CD4-positive, alpha-beta T cell (primary cell): ENCODE measurements at regions of chr6 and their contacts with region 1.

Region 1: DNA sequence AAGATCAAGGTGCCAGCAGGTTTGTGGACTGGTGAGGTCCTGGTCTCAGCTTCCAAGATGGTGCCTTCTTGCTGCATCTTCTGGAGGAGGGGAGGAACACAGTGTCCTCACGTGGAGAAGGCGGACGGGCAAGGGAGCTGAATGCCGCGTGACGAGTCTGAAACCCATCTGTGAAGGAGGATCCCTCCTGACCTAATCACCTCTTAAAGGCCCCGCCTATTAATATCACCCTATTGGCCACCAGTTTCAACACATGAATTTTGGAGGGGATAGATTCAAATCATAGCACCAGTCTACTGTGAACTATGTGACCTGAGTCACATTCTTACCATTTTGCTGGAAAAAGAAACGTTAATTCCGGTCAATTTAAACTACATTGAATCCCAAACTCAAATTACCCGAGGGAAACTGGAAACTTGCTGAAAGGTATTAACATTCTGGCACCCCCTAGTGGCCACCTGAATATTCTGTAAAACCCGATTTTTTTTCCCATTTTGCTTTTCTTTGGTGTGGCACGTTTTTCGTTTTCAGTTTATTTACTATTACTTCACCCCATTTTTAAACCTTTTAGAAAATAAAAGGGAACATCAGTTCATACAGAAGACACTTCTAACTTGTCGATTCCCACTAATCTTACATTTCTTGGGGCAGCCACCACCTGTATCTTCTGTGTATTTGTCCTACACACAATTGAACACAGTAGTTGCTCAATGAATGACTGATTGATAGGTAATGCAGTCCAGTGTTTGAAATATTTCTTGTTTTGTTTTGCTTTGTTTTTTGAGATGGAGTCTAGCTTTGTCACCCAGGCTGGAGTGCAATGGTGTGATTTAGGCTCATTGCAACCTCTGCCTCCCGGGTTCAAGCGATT is 17.9 kb upstream of the CCDC170 start:
- DNase-seq: peak in 11 of 14 experiments; percentile 7 to 76 (median 34)
- ATAC-seq: no peak
- H3K4me3 ChIP-seq: no peak overlapping the region
- H3K4me3 Mint-ChIP-seq: peak overlapping the region; percentile 48
- H3K27ac ChIP-seq: no peak overlapping the region
- H3K27ac Mint-ChIP-seq: no peak overlapping the region
- H3K4me1 ChIP-seq: peaks cover 2% of the 10 kb centered on the region
- H3K4me1 Mint-ChIP-seq: peaks cover 10% of the 10 kb centered on the region
- H3K27me3 ChIP-seq: no peaks in the 10 kb centered on the region
- H3K27me3 Mint-ChIP-seq: no peaks in the 10 kb centered on the region
- CTCF ChIP-seq: peak; percentile 93

Region 2: GRCh38 chr6:149545754-149546528 is 1929.9 kb before region 1 on chr6 and contains the start of gene PPIL4:
- CTCF ChIA-PET with region 1: no interaction called
- POLR2A ChIA-PET with region 1: no interaction called
- intact Hi-C with region 1: no loop called
- DNase-seq: peak; percentile 93 to 99 (median 96)
- ATAC-seq: peak; percentile 82
- H3K4me3 ChIP-seq: peak within 1 kb of the TSS; percentile 69
- H3K4me3 Mint-ChIP-seq: peak within 1 kb of the TSS; percentile 99
- H3K27ac ChIP-seq: peak within 1 kb of the TSS; percentile 98 to 99
- H3K27ac Mint-ChIP-seq: peak within 1 kb of the TSS; percentile 96
- H3K4me1 ChIP-seq: peaks cover 21% of the 10 kb centered on the region
- H3K4me1 Mint-ChIP-seq: peaks cover 37% of the 10 kb centered on the region
- H3K27me3 ChIP-seq: no peaks in the 10 kb centered on the region
- H3K27me3 Mint-ChIP-seq: no peaks in the 10 kb centered on the region
- CTCF ChIP-seq: peak; percentile 99
- total RNA-seq, gene PPIL4: 51.8 to 53.5 TPM

Region 3: DNA sequence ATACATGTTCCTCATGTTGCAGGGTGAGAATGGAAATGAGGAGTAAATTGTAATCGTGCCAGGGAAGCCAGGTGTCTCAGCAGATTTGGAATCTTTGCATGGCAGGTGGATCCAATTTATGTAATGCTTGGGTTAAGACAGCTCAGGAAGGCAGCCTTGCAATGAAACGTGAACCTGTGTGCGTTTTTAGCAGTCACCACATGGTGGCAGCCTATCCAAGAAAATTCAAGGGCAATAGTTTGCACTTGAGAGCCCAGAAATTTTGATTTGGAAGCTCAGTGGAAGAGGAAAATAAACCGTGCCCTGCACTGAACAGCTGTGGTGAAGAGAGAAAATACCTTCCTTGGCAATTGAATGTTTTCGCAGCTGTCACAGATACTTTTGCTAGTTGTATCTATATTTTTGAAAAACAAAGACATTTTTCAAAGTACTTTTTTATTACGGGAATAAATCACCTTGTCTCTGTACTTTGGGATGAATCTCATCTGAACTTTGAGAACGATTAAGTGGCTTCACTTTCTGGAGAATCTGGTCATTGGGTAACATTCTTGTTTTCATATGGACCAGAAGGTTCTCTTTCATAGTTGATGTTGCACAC is 583.9 kb before region 1 on chr6:
- CTCF ChIA-PET with region 1: no interaction called
- POLR2A ChIA-PET with region 1: no interaction called
- intact Hi-C with region 1: loop called (anchors 5 to 10 kb)
- DNase-seq: peak; percentile 30 to 74 (median 50)
- ATAC-seq: peak; percentile 71
- H3K4me3 ChIP-seq: no peak overlapping the region
- H3K4me3 Mint-ChIP-seq: no peak overlapping the region
- H3K27ac ChIP-seq: no peak overlapping the region
- H3K27ac Mint-ChIP-seq: no peak overlapping the region
- H3K4me1 ChIP-seq: peaks cover 7% of the 10 kb centered on the region
- H3K4me1 Mint-ChIP-seq: peaks cover 19% of the 10 kb centered on the region
- H3K27me3 ChIP-seq: no peaks in the 10 kb centered on the region
- H3K27me3 Mint-ChIP-seq: no peaks in the 10 kb centered on the region
- CTCF ChIP-seq: peak; percentile 91

Region 4: GRCh38 chr6:151014404-151015100 is 461.3 kb before region 1 on chr6:
- CTCF ChIA-PET with region 1: no interaction called
- POLR2A ChIA-PET with region 1: no interaction called
- intact Hi-C with region 1: loop called (anchors 10 kb)
- DNase-seq: peak; percentile 32 to 79 (median 42)
- ATAC-seq: peak; percentile 60
- H3K4me3 ChIP-seq: no peak overlapping the region
- H3K4me3 Mint-ChIP-seq: peak overlapping the region; percentile 6
- H3K27ac ChIP-seq: no peak overlapping the region
- H3K27ac Mint-ChIP-seq: no peak overlapping the region
- H3K4me1 ChIP-seq: peaks cover 2% of the 10 kb centered on the region
- H3K4me1 Mint-ChIP-seq: peaks cover 4% of the 10 kb centered on the region
- H3K27me3 ChIP-seq: no peaks in the 10 kb centered on the region
- H3K27me3 Mint-ChIP-seq: no peaks in the 10 kb centered on the region
- CTCF ChIP-seq: peak; percentile 98

Region 5: GRCh38 chr6:151349651-151350282 is 126.1 kb before region 1 on chr6:
- CTCF ChIA-PET with region 1: no interaction called
- POLR2A ChIA-PET with region 1: no interaction called
- intact Hi-C with region 1: loop called in 1 of 2 experiments (anchors 2 kb)
- DNase-seq: no peak
- ATAC-seq: no peak
- H3K4me3 ChIP-seq: no peak overlapping the region
- H3K4me3 Mint-ChIP-seq: no peak overlapping the region
- H3K27ac ChIP-seq: no peak overlapping the region
- H3K27ac Mint-ChIP-seq: no peak overlapping the region
- H3K4me1 ChIP-seq: peaks cover 11% of the 10 kb centered on the region
- H3K4me1 Mint-ChIP-seq: no peaks in the 10 kb centered on the region
- H3K27me3 ChIP-seq: no peaks in the 10 kb centered on the region
- H3K27me3 Mint-ChIP-seq: no peaks in the 10 kb centered on the region
- CTCF ChIP-seq: no peak

Region 6: GRCh38 chr6:151409260-151409659 is 66.6 kb before region 1 on chr6:
- CTCF ChIA-PET with region 1: no interaction called
- POLR2A ChIA-PET with region 1: no interaction called
- intact Hi-C with region 1: loop called in 1 of 2 experiments (anchors 2 kb)
- DNase-seq: no peak
- ATAC-seq: no peak
- H3K4me3 ChIP-seq: no peak overlapping the region
- H3K4me3 Mint-ChIP-seq: no peak overlapping the region
- H3K27ac ChIP-seq: no peak overlapping the region
- H3K27ac Mint-ChIP-seq: peak overlapping the region; percentile 4
- H3K4me1 ChIP-seq: peaks cover 15% of the 10 kb centered on the region
- H3K4me1 Mint-ChIP-seq: peaks cover 44% of the 10 kb centered on the region
- H3K27me3 ChIP-seq: no peaks in the 10 kb centered on the region
- H3K27me3 Mint-ChIP-seq: no peaks in the 10 kb centered on the region
- CTCF ChIP-seq: no peak

Region 7: DNA sequence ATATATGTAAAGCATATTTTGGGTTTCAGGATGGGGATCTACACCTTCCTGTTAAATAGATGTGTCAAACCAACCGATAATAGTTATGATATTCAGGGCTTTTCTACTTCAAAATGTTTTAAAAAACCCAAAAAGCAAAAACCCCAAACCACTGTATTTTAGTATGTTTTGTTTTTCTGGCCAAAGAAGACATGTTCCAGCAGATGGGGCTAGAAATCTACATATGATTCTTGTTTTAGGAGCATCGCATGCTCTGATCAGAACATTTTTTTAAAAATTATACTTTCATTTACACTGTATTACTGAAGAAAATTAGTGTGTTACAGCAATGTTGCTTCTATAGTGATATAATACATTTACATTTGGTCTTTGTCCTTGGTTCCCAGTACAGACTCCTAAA is 35.0 kb before region 1 on chr6:
- CTCF ChIA-PET with region 1: interaction called, 6 read pairs
- POLR2A ChIA-PET with region 1: interaction called, 3 read pairs
- intact Hi-C with region 1: loop called (anchors 1 kb)
- DNase-seq: peak in 3 of 14 experiments; percentile 46 to 67 (median 66)
- ATAC-seq: peak; percentile 66
- H3K4me3 ChIP-seq: no peak overlapping the region
- H3K4me3 Mint-ChIP-seq: no peak overlapping the region
- H3K27ac ChIP-seq: no peak overlapping the region
- H3K27ac Mint-ChIP-seq: no peak overlapping the region
- H3K4me1 ChIP-seq: peaks cover 6% of the 10 kb centered on the region
- H3K4me1 Mint-ChIP-seq: peaks cover 52% of the 10 kb centered on the region
- H3K27me3 ChIP-seq: no peaks in the 10 kb centered on the region
- H3K27me3 Mint-ChIP-seq: no peaks in the 10 kb centered on the region
- CTCF ChIP-seq: peak; percentile 65

Region 8: DNA sequence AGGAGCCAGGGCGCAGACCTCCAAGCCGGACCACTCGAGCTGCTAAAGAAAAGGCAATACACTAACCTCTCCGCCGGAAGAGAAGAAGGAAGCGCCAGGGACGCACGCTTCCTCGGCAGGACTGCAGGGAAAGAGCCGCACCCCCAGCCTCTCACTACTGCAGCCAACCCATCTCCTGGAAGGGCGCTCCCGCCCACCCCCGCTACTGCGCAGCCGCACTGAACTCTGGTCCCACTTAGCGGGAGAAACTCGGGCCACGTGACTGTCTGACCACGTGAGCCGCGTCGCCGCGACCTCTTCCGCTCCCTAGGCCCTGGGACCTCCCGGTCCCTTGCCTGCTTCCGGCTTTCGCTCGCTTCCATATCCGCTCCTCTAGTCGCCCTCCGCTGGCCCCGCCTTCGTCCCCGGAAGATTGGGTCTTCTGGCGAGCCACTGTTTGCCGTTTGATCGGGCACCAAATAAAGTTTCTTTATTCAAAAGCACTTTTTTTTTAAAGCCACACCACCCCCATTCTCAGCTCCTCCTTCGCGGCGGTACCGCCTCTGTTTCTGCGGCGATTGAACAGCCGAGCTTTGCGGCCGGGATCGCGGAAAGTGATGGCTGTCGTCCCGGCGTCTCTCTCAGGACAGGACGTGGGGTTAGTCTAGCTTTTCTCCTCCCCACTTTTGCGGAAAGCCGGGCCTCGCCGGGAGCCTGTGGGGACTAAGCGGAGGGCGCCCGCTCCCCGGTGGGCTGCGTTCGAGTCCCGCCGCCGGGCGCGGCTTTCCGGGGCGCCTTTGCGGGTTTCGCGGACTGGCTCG is 23.7 kb before region 1 on chr6 and contains the start of gene RMND1:
- CTCF ChIA-PET with region 1: interaction called, 4 read pairs
- POLR2A ChIA-PET with region 1: interaction called, 13 read pairs
- intact Hi-C with region 1: no loop called
- DNase-seq: peak; percentile 96 to 100 (median 99)
- ATAC-seq: peak; percentile 95
- H3K4me3 ChIP-seq: peak within 1 kb of the TSS; percentile 76
- H3K4me3 Mint-ChIP-seq: peak within 1 kb of the TSS; percentile 91
- H3K27ac ChIP-seq: peak within 1 kb of the TSS; percentile 52 to 85
- H3K27ac Mint-ChIP-seq: peak within 1 kb of the TSS; percentile 80
- H3K4me1 ChIP-seq: peaks cover 13% of the 10 kb centered on the region
- H3K4me1 Mint-ChIP-seq: peaks cover 65% of the 10 kb centered on the region
- H3K27me3 ChIP-seq: no peaks in the 10 kb centered on the region
- H3K27me3 Mint-ChIP-seq: no peaks in the 10 kb centered on the region
- CTCF ChIP-seq: no peak
- total RNA-seq, gene RMND1: 6.5 to 7.5 TPM